ENCODE measurements at regions of chr2 and their contacts with region 1.

Region 1: DNA sequence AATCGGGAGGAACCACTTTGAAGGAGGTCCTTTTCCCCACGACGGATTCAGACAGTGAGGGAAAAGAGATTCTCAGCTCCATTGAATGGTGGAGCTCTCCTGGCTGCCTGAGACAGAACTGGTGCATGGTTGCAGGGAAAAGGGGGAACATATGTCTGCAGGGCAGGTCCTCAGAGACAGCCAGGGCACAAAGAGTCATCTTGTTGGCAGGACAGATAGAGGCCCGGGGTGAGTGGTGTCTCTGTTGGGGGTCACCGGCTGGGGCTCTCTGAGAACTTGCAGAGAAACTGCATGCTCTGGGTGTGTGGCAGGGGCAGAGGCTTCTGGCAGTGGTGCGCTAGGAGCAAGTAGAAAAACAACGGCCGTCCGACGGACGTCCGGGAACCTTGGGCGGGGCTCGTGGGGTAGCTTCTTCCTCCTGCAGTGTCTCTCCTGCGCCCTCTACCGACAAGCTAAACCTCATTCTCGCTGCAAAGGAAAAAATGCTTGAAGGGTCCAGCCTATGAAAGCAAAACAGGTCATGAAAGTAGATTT is 94.3 kb downstream of the CDCA7 start:
- H3K4me3 ChIP-seq: peak overlapping the region; percentile 25
- H3K27ac ChIP-seq: no peak overlapping the region
- H3K4me1 ChIP-seq: 0 out of 2 replicates have a peak, but pooled peaks cover 3% of the 10 kb centered on the region
- CTCF ChIP-seq: peak; percentile 61

Region 2: GRCh38 chr2:173286153-173286809 is 162.7 kb before region 1 on chr2:
- CTCF ChIA-PET with region 1: no interaction called
- POLR2A ChIA-PET with region 1: no interaction called
- H3K4me3 ChIP-seq: no peak overlapping the region
- H3K27ac ChIP-seq: no peak overlapping the region
- H3K4me1 ChIP-seq: no peaks in the 10 kb centered on the region
- CTCF ChIP-seq: no peak

Region 3: GRCh38 chr2:173483137-173483536 is 34.1 kb after region 1 on chr2:
- CTCF ChIA-PET with region 1: interaction called, 11 read pairs
- POLR2A ChIA-PET with region 1: no interaction called
- H3K4me3 ChIP-seq: no peak overlapping the region
- H3K27ac ChIP-seq: no peak overlapping the region
- H3K4me1 ChIP-seq: no peaks in the 10 kb centered on the region
- CTCF ChIP-seq: no peak

Region 4: DNA sequence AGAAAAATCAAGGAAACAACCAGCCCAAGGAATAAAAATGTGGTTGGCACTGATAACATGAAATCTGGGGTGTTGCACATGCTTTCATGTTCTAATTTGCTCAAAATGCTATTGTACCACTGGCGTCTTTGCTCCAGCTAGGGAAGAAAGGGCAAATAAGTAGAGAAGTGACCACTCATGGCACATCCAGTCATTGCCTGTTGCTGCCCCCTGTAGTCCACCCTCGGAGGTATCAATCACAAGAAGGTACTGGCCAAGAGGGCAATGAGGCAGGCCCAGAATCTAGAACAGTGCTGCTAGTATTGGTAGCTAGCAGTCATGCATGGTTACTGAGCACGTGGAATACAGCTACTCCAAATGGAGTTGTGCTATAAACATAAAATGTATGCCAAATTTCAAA is 119.0 kb after region 1 on chr2:
- CTCF ChIA-PET with region 1: interaction called, 11 read pairs
- POLR2A ChIA-PET with region 1: no interaction called
- H3K4me3 ChIP-seq: no peak overlapping the region
- H3K27ac ChIP-seq: no peak overlapping the region
- H3K4me1 ChIP-seq: peaks cover 5% of the 10 kb centered on the region; the same call in 1 of the 2 replicates
- CTCF ChIP-seq: peak; percentile 43; the same call in 1 of the 2 replicates

Measured in HEK293 (cell line).